Calu3 (cell line): ENCODE measurements at regions of chr15 and their contacts with region 1.

Region 1: DNA sequence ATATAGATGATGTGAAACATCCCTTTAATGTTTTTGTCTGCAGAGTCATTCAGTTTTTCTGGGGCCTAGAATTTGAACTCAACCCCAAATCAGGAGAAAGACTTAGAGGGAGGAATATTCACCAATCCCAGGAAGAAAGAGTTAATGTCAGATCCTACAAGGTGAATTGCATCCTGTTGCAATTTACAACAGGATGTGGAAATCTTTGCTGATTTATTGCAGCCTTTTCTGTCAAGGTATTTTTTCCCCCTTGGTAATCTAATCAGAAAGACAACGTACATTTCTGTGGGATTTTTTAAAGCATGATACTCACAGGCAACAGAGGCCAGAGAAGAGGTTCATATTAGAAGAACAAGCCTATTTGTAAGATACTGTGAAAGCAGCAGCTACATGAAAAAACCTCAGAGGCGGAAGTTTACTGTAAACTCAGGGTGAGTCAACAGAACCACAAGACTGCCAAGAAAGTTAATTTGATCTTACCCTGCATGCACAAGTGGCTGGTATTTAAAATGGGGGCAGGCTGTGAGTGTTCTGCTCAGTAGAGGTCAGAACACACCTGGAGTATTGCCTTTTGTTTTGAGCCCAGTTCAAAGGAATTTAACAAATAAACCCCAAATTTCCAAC is 531.9 kb downstream of the AGBL1 start:
- DNase-seq: no peak
- H3K4me3 Mint-ChIP-seq: no peak overlapping the region
- H3K27ac Mint-ChIP-seq: no peak overlapping the region
- H3K4me1 Mint-ChIP-seq: no peaks in the 10 kb centered on the region
- H3K27me3 Mint-ChIP-seq: no peaks in the 10 kb centered on the region
- CTCF ChIP-seq: no peak

Region 2: DNA sequence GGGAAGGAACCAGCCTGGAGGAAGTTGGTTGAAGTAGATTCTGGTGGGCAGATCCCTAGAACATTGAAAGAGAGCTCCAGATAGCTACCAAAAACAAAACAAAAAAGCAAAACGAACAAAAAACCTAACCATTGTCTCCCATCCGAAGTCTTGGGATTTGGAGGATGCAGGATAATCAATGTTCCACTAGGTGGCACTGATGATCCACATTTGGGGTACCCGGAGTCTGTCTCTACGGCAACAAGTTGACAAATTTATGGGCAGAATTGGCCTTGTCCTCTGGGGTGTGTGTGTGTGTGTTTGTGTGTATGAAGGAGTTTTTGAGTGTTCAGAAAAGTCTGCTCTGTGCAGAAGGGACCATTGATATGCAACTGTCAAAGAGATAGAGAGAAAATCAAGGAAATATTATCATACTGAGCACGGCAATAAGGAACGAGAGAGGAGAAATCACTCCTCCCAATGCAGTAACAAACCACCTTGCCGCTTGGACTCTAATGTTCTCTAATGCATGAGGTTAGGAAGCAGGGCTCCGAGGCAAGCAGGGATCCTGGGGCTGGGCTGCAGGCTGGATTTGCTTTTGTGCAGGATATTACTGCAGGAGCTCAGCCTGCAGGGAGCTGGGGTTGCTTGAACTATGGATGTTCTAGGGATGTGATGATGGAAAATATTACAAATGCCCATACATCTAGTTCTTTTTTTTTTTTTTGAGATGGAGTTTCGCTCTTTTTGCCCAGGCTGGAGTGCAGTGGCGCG is 757.0 kb before region 1 on chr15:
- CTCF ChIA-PET with region 1: no interaction called
- intact Hi-C with region 1: loop called (anchors 5 kb)
- DNase-seq: peak; percentile 66
- H3K4me3 Mint-ChIP-seq: no peak overlapping the region
- H3K27ac Mint-ChIP-seq: no peak overlapping the region
- H3K4me1 Mint-ChIP-seq: peaks cover 17% of the 10 kb centered on the region
- H3K27me3 Mint-ChIP-seq: peaks cover 74% of the 10 kb centered on the region
- CTCF ChIP-seq: peak; percentile 83

Region 3: DNA sequence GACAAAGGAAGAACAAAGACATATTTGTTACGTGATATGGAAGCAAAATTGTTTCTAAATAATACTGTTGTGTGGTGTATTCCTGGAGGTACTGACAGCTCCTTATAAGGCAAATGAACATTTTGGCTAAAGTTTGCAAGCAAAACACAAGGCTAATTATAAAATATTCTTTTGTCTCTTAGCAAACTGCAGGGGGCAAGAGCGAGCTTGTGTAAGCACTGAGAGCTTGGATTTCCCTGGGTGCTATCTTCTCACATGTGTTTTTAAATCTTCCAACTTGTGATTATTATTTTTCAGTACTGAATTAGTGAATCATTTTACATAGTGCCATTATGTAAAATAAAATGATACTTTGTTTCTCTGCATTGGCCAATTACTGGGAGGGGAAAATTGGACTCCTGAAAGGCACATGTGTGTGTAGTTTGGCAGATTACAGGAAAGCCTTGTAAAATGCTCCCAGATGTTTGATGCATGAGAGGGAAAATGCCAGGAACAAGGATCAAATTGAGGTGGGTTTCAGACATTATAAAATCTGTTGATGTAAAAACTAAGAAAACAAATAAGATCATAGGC is 79.6 kb after region 1 on chr15:
- CTCF ChIA-PET with region 1: no interaction called
- intact Hi-C with region 1: no loop called
- DNase-seq: no peak
- H3K4me3 Mint-ChIP-seq: no peak overlapping the region
- H3K27ac Mint-ChIP-seq: no peak overlapping the region
- H3K4me1 Mint-ChIP-seq: no peaks in the 10 kb centered on the region
- H3K27me3 Mint-ChIP-seq: no peaks in the 10 kb centered on the region
- CTCF ChIP-seq: no peak